MCF 10A (cell line): ENCODE measurements at regions of chr1 and their contacts with region 1.

Region 1: GRCh38 chr1:196063293-196063692 is 544.9 kb downstream of the KCNT2 start:
- DNase-seq: peak; percentile 78
- H3K4me3 Mint-ChIP-seq: no peak overlapping the region
- H3K27ac Mint-ChIP-seq: no peak overlapping the region
- H3K4me1 Mint-ChIP-seq: peaks cover 7% of the 10 kb centered on the region
- H3K27me3 Mint-ChIP-seq: no peaks in the 10 kb centered on the region
- CTCF ChIP-seq: no peak

Region 2: DNA sequence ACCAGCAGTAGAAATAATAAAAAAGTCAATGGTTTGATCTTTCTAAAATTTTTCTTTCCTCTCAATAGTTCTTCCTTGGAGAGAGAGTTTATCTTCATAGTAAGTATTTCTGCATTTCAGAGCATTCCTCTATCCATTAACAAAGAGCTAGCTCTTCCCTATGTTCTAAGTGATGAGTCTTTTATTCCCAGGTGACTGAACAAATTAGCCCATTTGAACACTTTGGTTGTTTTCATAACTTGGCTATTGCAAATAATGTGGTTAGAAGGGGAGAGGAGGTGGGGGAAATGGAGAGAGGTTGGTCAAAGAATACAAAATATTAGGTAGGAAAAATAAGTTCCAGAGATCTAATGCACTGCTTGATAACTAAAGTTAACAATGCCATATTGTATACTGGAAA is 53.9 kb before region 1 on chr1:
- CTCF ChIA-PET with region 1: no interaction called
- POLR2A ChIA-PET with region 1: no interaction called
- intact Hi-C with region 1: no loop called
- DNase-seq: no peak
- H3K4me3 Mint-ChIP-seq: no peak overlapping the region
- H3K27ac Mint-ChIP-seq: no peak overlapping the region
- H3K4me1 Mint-ChIP-seq: no peaks in the 10 kb centered on the region
- H3K27me3 Mint-ChIP-seq: no peaks in the 10 kb centered on the region
- CTCF ChIP-seq: no peak

Region 3: GRCh38 chr1:196078691-196079090 is 15.4 kb after region 1 on chr1:
- CTCF ChIA-PET with region 1: interaction called, 3 read pairs
- POLR2A ChIA-PET with region 1: interaction called, 3 read pairs
- intact Hi-C with region 1: loop called (anchors 2 kb)
- DNase-seq: peak; percentile 59
- H3K4me3 Mint-ChIP-seq: no peak overlapping the region
- H3K27ac Mint-ChIP-seq: no peak overlapping the region
- H3K4me1 Mint-ChIP-seq: peaks cover 6% of the 10 kb centered on the region
- H3K27me3 Mint-ChIP-seq: no peaks in the 10 kb centered on the region
- CTCF ChIP-seq: no peak

Region 4: GRCh38 chr1:196098000-196098399 is 34.7 kb after region 1 on chr1:
- CTCF ChIA-PET with region 1: no interaction called
- POLR2A ChIA-PET with region 1: no interaction called
- intact Hi-C with region 1: no loop called
- DNase-seq: no peak
- H3K4me3 Mint-ChIP-seq: no peak overlapping the region
- H3K27ac Mint-ChIP-seq: no peak overlapping the region
- H3K4me1 Mint-ChIP-seq: peaks cover 10% of the 10 kb centered on the region
- H3K27me3 Mint-ChIP-seq: no peaks in the 10 kb centered on the region
- CTCF ChIP-seq: no peak

Region 5: DNA sequence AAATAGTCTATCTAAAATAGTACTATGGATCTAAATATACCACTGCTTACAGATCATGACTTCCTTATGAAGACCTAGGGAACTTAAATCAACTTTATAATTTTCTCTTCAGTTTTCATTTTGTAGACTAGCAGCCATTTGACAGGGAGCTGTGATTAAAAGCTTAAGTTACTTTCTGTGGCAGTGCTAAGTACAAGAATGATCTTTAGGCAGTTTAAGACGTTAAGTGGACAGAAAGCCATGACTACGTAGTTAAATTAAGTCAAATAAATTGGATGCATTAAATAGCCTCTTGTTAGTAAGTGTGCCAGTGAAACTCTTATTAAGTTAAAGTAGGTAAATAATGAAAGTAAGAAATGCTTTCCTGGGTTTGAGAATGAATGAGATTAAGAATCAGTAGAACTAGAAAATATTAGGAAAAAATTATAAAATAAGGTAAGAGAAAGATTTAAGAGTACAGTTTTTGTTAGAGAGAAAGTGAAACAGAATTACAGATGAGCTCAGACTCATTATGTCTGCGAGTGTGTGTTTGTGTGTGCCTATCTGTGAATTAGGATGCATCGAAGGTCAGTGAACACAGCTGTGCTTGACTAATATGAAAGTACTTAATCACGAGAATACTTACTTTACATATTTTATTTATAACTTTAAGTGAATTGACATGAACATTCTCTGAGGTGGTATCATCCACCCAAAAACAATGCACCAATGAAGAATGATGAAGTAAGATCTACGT is 208.1 kb after region 1 on chr1:
- CTCF ChIA-PET with region 1: no interaction called
- POLR2A ChIA-PET with region 1: no interaction called
- intact Hi-C with region 1: no loop called
- DNase-seq: no peak
- H3K4me3 Mint-ChIP-seq: no peak overlapping the region
- H3K27ac Mint-ChIP-seq: no peak overlapping the region
- H3K4me1 Mint-ChIP-seq: no peaks in the 10 kb centered on the region
- H3K27me3 Mint-ChIP-seq: no peaks in the 10 kb centered on the region
- CTCF ChIP-seq: no peak